ENCODE measurements at regions of chr3 and their contacts with region 1.

Region 1: GRCh38 chr3:78666470-78666800 is 1101.4 kb downstream of the ROBO1 start:
- DNase-seq: peak; percentile 63
- ATAC-seq: peak; percentile 76; the same call in 1 of the 2 replicates
- H3K4me3 ChIP-seq: no peak overlapping the region
- H3K27ac ChIP-seq: no peak overlapping the region
- H3K4me1 ChIP-seq: peaks cover 1% of the 10 kb centered on the region; the same call in 1 of the 2 replicates
- H3K27me3 ChIP-seq: no peaks in the 10 kb centered on the region
- CTCF ChIP-seq: no peak
- POLR2A ChIP-seq: no peak
- RAD21 ChIP-seq: no peak

Region 2: GRCh38 chr3:78872195-78872594 is 205.8 kb after region 1 on chr3:
- CTCF ChIA-PET with region 1: no interaction called
- POLR2A ChIA-PET with region 1: no interaction called
- dilution Hi-C with region 1: no loop called
- in situ Hi-C with region 1: no loop called
- intact Hi-C with region 1: loop called (anchors 10 kb)
- DNase-seq: no peak
- ATAC-seq: no peak
- H3K4me3 ChIP-seq: no peak overlapping the region
- H3K27ac ChIP-seq: no peak overlapping the region
- H3K4me1 ChIP-seq: peaks cover 4% of the 10 kb centered on the region; the same call in 1 of the 2 replicates
- H3K27me3 ChIP-seq: no peaks in the 10 kb centered on the region
- CTCF ChIP-seq: no peak
- POLR2A ChIP-seq: no peak
- RAD21 ChIP-seq: no peak